ENCODE measurements at regions of chr5 and their contacts with region 1.

Region 1: GRCh38 chr5:65163698-65164097 is 318.0 kb downstream of the ADAMTS6 start:
- DNase-seq: no peak
- H3K4me3 ChIP-seq: no peak overlapping the region
- H3K27ac ChIP-seq: no peak overlapping the region
- H3K4me1 ChIP-seq: peaks cover 8% of the 10 kb centered on the region
- H3K27me3 ChIP-seq: no peaks in the 10 kb centered on the region
- CTCF ChIP-seq: no peak

Region 2: GRCh38 chr5:65682148-65682547 is 518.5 kb after region 1 on chr5:
- CTCF ChIA-PET with region 1: no interaction called
- POLR2A ChIA-PET with region 1: no interaction called
- intact Hi-C with region 1: no loop called
- DNase-seq: no peak
- H3K4me3 ChIP-seq: no peak overlapping the region
- H3K27ac ChIP-seq: no peak overlapping the region
- H3K4me1 ChIP-seq: no peaks in the 10 kb centered on the region
- H3K27me3 ChIP-seq: no peaks in the 10 kb centered on the region
- CTCF ChIP-seq: no peak

Region 3: GRCh38 chr5:67106626-67107342 is 1943.1 kb after region 1 on chr5:
- CTCF ChIA-PET with region 1: no interaction called
- POLR2A ChIA-PET with region 1: interaction called, 13 read pairs
- intact Hi-C with region 1: no loop called
- DNase-seq: no peak
- H3K4me3 ChIP-seq: no peak overlapping the region
- H3K27ac ChIP-seq: no peak overlapping the region
- H3K4me1 ChIP-seq: peaks cover 14% of the 10 kb centered on the region
- H3K27me3 ChIP-seq: no peaks in the 10 kb centered on the region
- CTCF ChIP-seq: no peak

Measured in PC-9 (cell line).